ENCODE measurements at regions of chr4 and their contacts with region 1.

Region 1: DNA sequence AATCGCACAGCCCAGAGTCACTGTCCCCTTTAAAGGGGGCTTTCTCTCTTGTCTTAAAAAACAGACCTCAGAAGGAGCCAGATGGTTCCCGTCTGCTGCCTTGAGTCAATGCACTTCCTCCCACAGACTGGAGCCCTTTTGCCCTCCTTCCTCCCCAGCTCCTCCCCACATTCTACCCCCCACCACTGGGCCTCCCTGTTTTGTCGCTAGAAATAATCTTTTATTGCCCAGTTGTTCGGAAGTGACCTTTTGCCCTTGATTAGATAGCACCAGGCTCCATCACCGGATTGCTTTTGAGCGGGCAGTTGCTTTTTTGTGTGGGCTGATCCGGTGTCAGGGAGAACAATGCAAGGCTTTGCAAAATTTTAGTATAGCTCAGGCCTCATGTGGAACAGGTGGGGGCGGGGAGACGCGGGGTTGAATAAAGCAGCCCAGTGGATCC is 47.7 kb downstream of the SPRY1 start:
- DNase-seq: peak; percentile 28
- H3K4me3 Mint-ChIP-seq: peak overlapping the region; percentile 35
- H3K27ac Mint-ChIP-seq: peak overlapping the region; percentile 78
- H3K4me1 Mint-ChIP-seq: peaks cover 30% of the 10 kb centered on the region
- H3K27me3 Mint-ChIP-seq: no peaks in the 10 kb centered on the region

Region 2: GRCh38 chr4:123415977-123416376 is 28.3 kb before region 1 on chr4:
- intact Hi-C with region 1: loop called (anchors 1 kb)
- DNase-seq: peak; percentile 50
- H3K4me3 Mint-ChIP-seq: peak overlapping the region; percentile 14
- H3K27ac Mint-ChIP-seq: peak overlapping the region; percentile 85
- H3K4me1 Mint-ChIP-seq: peaks cover 70% of the 10 kb centered on the region
- H3K27me3 Mint-ChIP-seq: no peaks in the 10 kb centered on the region

Region 3: DNA sequence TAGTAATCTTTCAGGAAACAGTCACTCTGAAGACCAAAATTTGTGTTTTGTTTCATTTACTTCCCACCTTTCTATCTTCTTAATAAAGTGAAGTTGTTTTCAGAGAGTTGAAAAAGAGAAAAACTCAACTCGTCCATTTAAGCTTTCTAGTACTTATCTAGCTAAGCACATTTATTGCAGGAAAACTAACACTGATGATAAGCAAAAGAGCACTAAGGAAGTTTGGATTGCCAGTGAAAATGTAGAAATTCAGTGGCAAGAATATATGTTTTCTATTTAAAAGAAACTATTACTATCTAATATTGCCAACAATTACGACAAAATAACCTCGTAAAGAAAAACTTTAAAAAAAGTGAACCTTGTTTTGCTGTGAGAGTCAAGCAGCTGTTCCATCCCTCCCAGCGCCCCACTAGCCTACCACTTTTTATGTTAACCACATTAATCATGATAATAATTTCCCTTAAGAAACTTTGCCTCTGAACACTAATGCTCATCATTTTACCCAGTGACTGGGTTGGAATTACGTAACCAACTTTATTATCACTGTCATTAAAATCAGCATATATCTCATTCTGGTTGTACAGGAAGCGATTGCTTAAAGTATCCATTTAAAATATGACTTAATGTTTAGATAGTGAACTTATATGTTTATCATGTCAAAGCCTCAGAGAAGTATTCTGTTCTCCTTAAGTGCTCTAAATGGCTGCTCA is 22.9 kb before region 1 on chr4:
- intact Hi-C with region 1: loop called (anchors 1 kb)
- DNase-seq: no peak
- H3K4me3 Mint-ChIP-seq: peak overlapping the region; percentile 5
- H3K27ac Mint-ChIP-seq: peak overlapping the region; percentile 99
- H3K4me1 Mint-ChIP-seq: peaks cover 69% of the 10 kb centered on the region
- H3K27me3 Mint-ChIP-seq: no peaks in the 10 kb centered on the region